Right ventricle myocardium inferior (tissue), 1 donor: ENCODE measurements at regions of chr17 and their contacts with region 1.

Region 1: DNA sequence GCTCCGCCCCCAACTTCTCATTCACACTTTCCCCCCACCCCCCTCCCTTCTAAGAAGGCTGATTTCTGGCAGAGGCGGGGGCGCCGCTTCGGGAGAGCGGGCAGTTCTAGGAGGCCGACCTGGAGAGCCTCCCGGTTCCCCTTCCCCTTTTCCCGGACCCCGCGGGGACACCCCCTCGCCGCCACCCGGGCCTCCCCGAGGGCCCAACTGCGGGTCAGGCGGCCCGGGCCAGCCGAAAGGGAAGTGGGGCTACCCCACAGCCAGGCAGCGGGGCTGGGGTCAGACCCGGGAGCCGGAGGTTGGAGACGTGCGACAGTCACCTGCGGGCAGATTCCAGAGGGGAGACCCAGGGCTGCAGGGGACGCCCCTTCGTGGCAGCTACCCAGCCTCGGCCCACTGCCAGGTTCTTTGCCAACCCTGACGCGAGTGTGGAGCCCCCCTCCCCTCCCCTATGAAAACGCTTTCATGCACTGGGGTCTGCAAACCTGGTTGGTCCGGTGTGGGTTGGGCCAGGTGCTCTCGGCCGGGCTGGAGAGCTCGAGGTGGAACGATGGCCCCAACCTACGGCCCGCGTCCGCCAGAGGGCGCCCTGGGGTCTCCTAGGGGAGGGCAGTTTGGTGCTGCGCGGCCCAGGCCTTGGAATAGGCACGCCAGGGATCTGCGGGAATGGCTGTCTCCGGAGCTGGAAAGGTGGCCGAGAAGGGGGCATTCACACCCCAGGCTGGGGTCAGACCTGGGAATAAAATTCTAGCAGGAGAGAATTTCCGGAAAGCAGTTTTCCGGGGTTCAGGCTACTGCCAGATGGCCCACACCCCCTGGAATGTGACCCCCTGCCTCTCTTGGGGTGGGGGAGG is 721 bp upstream of the SOCS3 start:
- DNase-seq: peak; percentile 96
- ATAC-seq: peak; percentile 72

Region 2: GRCh38 chr17:78231991-78232858 is 128.4 kb before region 1 on chr17:
- intact Hi-C with region 1: no loop called
- DNase-seq: no peak
- ATAC-seq: no peak

Region 3: DNA sequence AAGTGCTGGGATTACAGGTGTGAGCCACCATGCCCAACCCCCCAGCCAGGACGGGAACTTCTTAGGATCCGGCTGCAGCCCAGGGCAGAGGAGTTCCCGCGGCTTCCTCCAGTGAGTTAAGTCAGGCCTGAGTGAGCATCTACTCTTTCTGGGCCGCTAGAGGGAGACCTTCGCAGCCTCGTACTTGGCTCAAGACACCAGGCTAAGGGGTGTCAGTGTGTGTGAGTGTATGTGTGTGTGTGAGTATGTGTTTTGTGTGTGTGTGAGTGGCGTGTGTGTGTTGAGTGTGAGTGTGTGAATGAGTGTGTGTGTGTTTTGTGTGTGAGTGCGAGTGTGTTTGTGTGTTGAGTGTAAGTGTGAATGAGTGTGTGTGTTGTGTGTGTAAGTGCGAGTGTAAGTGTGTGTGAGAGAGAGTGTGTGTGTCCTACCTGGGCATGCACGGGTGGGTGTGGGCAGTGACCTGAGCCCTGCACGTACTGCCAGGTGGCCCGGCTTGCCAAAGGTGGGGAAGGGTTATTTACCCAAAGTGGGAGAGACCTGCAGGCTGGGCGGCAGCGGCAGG is 70.7 kb before region 1 on chr17:
- intact Hi-C with region 1: loop called (anchors 1 kb)
- DNase-seq: peak; percentile 85
- ATAC-seq: peak; percentile 90

Region 4: GRCh38 chr17:78313735-78314648 is 46.6 kb before region 1 on chr17:
- intact Hi-C with region 1: loop called (anchors 2 kb)
- DNase-seq: peak; percentile 85
- ATAC-seq: peak; percentile 74

Region 5: DNA sequence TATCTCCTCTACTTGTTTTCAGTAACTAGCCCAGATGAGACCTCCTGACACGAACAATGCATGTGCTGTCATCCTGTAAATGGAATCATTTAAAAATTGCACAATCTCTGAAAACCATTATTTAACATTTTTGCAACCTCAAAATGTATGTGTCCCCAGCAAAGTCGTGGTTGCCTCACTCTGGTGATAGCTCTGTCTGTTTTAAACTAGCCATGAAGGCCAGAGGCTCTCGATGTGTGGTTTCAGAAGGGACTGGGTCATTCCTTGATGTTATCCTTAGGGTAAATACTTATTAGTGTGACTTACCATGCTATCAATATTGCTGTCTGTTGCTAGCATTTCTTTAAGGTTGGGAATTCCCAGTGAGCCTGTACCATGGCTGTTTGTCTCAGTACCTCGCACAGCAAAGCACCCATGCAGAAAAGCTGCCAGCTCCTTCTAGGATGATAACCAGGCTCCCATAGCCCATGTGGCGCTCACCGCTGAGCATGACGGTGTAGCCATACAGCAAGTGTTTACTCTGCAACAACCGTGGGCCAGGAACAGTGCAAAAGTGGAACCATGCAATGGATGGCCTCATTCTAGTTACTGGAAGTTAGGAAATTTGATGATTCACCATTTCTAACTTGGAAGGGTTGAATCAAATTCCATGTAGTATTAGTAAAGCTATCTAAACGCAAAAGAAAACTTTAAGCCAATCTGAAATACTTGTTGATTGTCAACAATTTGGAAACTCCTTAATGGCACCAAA is 15.0 kb after region 1 on chr17:
- intact Hi-C with region 1: loop called (anchors 2 kb)
- DNase-seq: peak; percentile 83
- ATAC-seq: no peak

Region 6: GRCh38 chr17:78421484-78422266 is 61.1 kb after region 1 on chr17:
- intact Hi-C with region 1: loop called (anchors 1 kb)
- DNase-seq: peak; percentile 86
- ATAC-seq: peak; percentile 77

Region 7: DNA sequence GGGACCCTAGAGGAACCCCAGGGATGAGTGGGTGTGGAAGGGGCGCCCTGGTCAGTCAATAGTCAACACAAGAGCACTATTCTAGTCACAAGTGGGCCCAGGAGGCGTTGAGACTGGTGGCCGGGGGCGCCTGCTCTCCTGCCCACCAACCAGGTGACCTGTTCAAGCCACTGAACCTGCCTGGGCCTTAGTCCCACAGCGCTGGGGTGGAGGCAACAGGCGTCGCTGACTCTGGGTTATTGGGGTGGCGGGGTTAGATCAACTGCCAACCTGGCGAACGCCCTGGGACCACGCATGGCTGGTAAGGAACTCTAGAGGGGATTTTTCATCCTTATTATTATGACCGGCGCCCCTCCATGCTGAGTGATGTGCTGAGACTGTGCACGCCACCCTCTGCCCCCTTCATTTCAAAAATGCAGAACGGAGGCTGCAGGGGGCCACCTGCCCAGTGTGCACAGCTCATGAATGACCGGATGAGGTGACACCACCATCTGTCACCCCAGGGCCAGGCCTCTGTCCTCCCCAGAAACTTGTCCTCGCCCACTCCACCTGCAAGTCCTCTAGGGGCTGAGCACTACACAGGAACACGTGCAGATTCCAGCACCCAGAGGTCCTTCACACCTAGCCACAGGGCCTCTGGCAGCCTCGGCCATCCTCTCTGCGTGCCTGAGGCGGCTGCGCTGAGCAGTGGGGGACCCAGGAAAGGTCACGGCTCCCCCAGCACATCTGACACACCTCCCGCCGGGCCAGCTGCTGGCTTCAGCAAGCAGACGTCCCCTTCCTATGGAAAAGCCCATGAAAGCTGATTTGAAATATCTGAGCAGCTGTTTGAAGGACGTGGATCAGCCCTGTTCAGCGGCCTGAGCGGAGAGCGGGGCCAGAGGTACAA is 268.2 kb after region 1 on chr17:
- intact Hi-C with region 1: no loop called
- DNase-seq: no peak
- ATAC-seq: no peak